Activated CD8-positive, alpha-beta T cell treated with anti-CD3 and anti-CD28 coated beads, Interleukin-2, amount 10 ng/mL, durations not matched to agents 7 days and 5 days (primary cell): ENCODE measurements at regions of chr3 and their contacts with region 1.

Region 1: DNA sequence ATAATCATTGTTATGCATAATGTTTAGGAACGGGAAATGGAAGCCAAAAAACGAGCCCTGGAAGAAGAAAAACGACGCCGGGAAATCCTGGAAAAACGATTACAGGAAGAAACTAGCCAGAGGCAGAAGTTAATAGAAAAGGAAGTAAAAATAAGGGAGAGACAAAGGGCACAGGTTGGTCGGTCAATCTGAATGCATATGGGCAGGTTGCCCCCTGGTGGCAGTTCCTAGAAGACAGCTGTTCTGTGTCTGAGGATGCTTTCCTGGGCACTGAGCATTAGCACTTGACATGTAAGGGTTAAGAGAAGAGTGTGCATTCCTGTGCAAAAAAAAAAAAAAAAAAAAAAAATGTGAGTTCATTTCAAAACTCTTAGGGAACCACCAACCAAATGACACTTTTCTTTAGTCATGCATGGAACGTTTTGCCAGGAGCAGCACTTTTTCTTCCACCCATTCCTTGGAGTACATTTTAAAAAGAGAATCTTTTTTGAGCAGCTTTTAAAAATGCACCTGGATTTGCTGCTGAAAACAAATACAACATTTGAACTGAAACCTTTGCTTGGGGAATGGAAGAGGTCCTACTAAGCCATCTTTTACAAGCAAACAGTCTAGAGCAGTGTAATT is 11.1 kb upstream of the ABHD10 start:
- DNase-seq: peak; percentile 87
- ATAC-seq: peak; percentile 85
- H3K4me3 Mint-ChIP-seq: no peak overlapping the region
- H3K27ac Mint-ChIP-seq: no peak overlapping the region
- H3K4me1 Mint-ChIP-seq: peaks cover 4% of the 10 kb centered on the region
- H3K27me3 Mint-ChIP-seq: peaks cover 3% of the 10 kb centered on the region

Region 2: GRCh38 chr3:111668912-111669488 is 298.8 kb before region 1 on chr3:
- CTCF ChIA-PET with region 1: interaction called, 47 read pairs
- POLR2A ChIA-PET with region 1: no interaction called
- DNase-seq: no peak
- ATAC-seq: peak; percentile 32
- H3K4me3 Mint-ChIP-seq: no peak overlapping the region
- H3K27ac Mint-ChIP-seq: peak overlapping the region; percentile 75
- H3K4me1 Mint-ChIP-seq: peaks cover 84% of the 10 kb centered on the region
- H3K27me3 Mint-ChIP-seq: no peaks in the 10 kb centered on the region

Region 3: GRCh38 chr3:111717601-111718000 is 250.2 kb before region 1 on chr3:
- CTCF ChIA-PET with region 1: interaction called, 234 read pairs
- POLR2A ChIA-PET with region 1: interaction called, 4 read pairs
- DNase-seq: peak; percentile 79
- ATAC-seq: peak; percentile 91
- H3K4me3 Mint-ChIP-seq: no peak overlapping the region
- H3K27ac Mint-ChIP-seq: peak overlapping the region; percentile 27
- H3K4me1 Mint-ChIP-seq: peaks cover 6% of the 10 kb centered on the region
- H3K27me3 Mint-ChIP-seq: no peaks in the 10 kb centered on the region

Region 4: DNA sequence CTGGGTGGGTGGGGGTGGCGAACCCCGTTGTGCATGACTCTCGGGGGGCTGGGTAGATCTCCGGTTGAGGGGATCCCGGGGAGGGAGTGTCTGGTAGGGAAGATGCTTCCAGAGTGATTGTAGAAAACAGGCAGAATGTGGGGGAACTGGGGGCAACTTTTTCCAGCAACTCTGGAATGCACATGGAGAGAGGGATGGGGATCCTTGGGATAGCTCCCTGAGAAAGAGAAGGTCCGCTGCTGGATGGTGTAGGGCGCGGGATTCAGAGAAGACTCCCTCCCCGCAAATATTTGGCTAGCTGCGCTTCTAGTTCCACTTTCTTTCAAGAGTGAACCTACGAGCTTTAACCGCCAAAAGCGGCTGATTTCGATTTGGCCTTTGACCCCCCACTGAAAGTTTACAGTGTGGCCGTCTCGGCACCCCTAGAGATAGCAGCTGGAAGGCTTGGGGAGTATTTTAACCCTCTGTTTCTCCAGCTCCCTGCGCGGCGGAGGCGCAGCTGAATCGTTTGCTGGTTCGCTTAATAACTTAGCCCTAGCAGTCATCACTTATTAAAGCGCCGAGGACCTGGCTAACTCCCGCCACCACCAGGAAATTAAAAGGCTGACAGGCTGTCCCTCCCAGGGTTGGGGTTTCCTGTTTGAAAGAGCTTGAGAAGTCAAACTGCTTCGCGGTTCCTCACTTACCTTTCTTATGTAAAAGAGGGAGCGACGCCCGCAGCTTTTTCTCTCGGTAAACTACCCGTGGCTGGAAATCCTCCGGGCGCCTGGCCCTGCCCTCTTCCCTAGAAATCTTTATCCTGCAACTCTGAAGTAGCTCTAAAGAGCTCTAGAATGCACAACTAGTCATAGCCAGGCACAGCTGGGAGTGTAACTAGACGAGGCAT is 107.5 kb before region 1 on chr3:
- CTCF ChIA-PET with region 1: interaction called, 29 read pairs
- POLR2A ChIA-PET with region 1: no interaction called
- DNase-seq: peak; percentile 78
- ATAC-seq: peak; percentile 73
- H3K4me3 Mint-ChIP-seq: peak overlapping the region; percentile 86
- H3K27ac Mint-ChIP-seq: peak overlapping the region; percentile 77
- H3K4me1 Mint-ChIP-seq: peaks cover 11% of the 10 kb centered on the region
- H3K27me3 Mint-ChIP-seq: peaks cover 45% of the 10 kb centered on the region

Region 5: GRCh38 chr3:111956995-111957734 is 10.6 kb before region 1 on chr3:
- CTCF ChIA-PET with region 1: interaction called, 22 read pairs
- POLR2A ChIA-PET with region 1: no interaction called
- DNase-seq: no peak
- ATAC-seq: no peak
- H3K4me3 Mint-ChIP-seq: no peak overlapping the region
- H3K27ac Mint-ChIP-seq: no peak overlapping the region
- H3K4me1 Mint-ChIP-seq: peaks cover 2% of the 10 kb centered on the region
- H3K27me3 Mint-ChIP-seq: no peaks in the 10 kb centered on the region

Region 6: DNA sequence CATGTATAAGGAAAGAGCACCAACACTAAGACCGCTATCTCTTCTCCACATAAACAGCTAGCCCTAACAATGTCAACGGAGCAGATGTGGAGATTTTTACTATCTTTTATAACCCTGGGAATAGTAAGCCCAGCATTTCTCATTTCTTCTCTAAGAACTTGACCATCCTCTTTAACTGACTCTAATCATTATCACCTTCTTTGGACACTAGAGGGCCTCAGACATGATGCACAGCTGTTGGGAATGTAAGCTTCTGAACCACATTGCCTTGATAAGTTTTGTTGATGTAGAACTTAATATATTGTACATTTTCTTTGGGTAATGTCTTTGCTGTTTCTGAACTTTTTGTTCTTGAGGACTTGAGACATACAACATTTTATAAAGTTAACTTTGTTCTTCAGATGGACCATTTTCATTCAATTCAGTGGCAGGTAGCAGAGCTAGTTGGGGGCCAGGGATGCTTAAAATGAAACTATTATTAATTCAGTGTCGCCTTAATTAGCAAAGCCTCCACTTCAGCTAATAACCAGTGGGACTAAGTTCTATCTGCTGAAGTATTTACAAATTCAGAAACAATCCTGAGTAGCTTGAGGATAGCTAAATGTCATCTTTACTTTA is 21.4 kb after region 1 on chr3:
- CTCF ChIA-PET with region 1: interaction called, 18 read pairs
- POLR2A ChIA-PET with region 1: no interaction called
- DNase-seq: no peak
- ATAC-seq: peak; percentile 88
- H3K4me3 Mint-ChIP-seq: no peak overlapping the region
- H3K27ac Mint-ChIP-seq: no peak overlapping the region
- H3K4me1 Mint-ChIP-seq: peaks cover 28% of the 10 kb centered on the region
- H3K27me3 Mint-ChIP-seq: no peaks in the 10 kb centered on the region

Region 7: DNA sequence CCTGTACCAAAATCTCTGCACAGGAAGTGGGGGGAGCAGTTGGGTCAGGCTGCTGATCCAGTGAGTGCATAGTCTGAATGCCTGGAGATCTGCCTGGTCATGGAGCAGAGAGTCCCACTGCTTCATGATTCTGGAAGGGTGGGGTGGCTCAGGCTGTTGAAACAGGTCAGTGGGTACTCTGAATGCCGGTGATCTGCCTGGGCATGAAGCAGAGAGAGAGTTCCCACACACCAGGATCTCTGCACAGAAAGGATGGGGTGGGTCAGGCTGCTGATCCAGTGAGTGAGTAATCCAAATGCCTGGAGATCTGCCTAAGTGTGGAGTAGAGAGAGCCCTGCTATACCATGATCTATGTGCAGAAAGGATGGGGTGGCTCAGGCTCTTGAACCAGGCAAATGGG is 181.4 kb after region 1 on chr3:
- CTCF ChIA-PET with region 1: no interaction called
- POLR2A ChIA-PET with region 1: no interaction called
- DNase-seq: no peak
- ATAC-seq: no peak
- H3K4me3 Mint-ChIP-seq: no peak overlapping the region
- H3K27ac Mint-ChIP-seq: no peak overlapping the region
- H3K4me1 Mint-ChIP-seq: no peaks in the 10 kb centered on the region
- H3K27me3 Mint-ChIP-seq: no peaks in the 10 kb centered on the region